Naive thymus-derived CD4-positive, alpha-beta T cell (primary cell): ENCODE measurements at regions of chr12 and their contacts with region 1.

Region 1: DNA sequence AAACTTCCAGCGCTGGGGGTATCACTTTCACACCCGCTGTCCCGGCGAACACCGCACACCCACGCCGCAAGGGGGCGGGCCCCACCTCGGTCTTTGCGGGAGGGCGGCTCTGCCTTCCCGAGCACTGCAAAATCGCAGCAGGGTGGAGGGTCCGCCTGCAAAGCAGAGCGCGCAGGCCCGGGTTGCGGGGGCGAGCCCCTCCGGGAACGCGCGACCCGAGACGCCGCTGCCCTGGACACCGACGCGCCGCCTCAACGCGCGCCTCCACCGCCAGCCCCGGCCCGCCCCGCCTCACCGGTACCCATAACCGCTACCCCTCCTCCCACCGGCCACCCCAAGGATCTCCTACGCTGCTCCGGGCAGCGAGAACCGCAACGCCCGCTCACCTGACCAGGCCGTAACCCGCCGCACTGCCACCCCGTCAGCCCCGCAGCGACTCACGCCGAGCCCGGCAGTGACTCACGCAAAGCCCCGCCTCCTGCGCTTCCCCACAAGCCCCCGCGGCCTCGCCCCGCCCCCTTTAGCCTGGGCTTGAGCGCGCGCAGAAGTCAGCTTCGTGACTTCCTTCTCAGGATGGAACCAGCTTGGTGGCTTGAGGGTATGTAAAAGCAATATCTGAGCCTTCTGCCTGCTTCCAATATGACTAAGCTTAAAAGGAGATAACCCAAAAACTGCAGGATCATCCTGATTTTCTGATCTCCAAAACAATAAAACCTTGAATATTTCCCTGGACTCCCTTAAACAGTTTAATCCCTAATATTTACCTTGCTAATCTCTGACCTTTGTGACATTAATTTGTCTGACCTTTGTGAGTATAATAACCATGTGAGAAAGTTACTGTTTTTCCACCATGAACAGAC is at the start of gene RPAP3:
- DNase-seq: peak; percentile 91 to 99 (median 95)
- ATAC-seq: peak; percentile 97
- H3K4me3 ChIP-seq: peak within 1 kb of the TSS; percentile 59
- H3K4me3 Mint-ChIP-seq: peak within 1 kb of the TSS; percentile 92 to 99 (median 98)
- H3K27ac ChIP-seq: peak within 1 kb of the TSS; percentile 85
- H3K27ac Mint-ChIP-seq: peak within 1 kb of the TSS; percentile 93 to 99 (median 97)
- H3K4me1 ChIP-seq: peaks cover 21 to 27% of the 10 kb centered on the region in 2 donors
- H3K4me1 Mint-ChIP-seq: peaks cover 48 to 73% (median 63%) of the 10 kb centered on the region in 7 donors
- H3K27me3 ChIP-seq: no peaks in the 10 kb centered on the region
- H3K27me3 Mint-ChIP-seq: no peaks in the 10 kb centered on the region
- total RNA-seq, gene RPAP3: 28.5 to 51.3 (median 43.9) TPM

Region 2: GRCh38 chr12:46382964-46383653 is 1322.7 kb before region 1 on chr12:
- CTCF ChIA-PET with region 1: no interaction called
- POLR2A ChIA-PET with region 1: no interaction called
- intact Hi-C with region 1: loop called in 1 of 2 experiments (anchors 1 kb)
- DNase-seq: peak; percentile 76 to 96 (median 90)
- ATAC-seq: peak; percentile 89
- H3K4me3 ChIP-seq: peak overlapping the region; percentile 61
- H3K4me3 Mint-ChIP-seq: peak overlapping the region; percentile 82 to 95 (median 91)
- H3K27ac ChIP-seq: peak overlapping the region; percentile 94
- H3K27ac Mint-ChIP-seq: peak overlapping the region; percentile 90 to 98 (median 97)
- H3K4me1 ChIP-seq: peaks cover 5 to 25% of the 10 kb centered on the region in 2 donors
- H3K4me1 Mint-ChIP-seq: peaks cover 24 to 53% (median 47%) of the 10 kb centered on the region in 7 donors
- H3K27me3 ChIP-seq: no peaks in the 10 kb centered on the region
- H3K27me3 Mint-ChIP-seq: no peaks in the 10 kb centered on the region

Region 3: DNA sequence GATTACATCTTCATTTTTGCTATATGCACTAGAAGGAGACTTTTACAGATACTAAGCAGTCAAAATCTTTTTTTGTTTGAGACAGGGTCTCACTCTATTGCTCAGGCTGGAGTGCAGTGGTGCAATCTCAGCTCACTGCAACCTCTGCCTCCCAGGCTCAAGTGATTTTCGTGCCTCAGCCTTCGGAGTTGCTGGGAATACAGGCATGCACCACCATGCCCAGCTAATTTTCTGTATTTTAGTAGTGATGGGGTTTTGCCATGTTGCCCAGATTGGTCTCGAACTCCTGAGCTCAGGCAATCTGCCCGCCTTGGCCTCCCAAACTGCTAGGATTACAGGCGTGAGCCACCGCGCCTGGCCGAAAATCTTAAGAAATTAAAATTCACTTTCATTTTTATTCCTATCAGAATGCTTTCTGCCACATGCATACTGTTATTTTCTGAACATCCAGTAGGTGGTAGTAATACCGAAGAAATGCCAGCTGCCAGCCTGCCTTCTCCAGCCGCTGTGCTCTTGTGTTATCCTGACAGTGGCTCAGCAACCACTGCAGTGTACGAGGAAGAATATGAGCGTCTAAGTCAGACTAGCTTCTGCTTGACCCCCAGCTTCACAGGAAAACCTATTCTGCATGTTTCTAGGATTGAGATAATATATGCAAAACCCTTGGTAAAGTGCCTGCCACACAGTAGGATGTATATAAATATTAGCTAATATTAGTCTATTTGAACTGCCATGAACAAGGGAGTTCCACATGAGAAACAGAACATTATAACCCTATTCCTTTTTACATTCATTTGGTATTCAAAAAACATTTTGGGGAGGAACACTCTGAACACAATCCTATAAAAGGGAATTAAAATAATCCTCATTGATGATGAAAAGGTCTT is 54.2 kb before region 1 on chr12:
- CTCF ChIA-PET with region 1: interaction called, 3 read pairs
- POLR2A ChIA-PET with region 1: no interaction called
- intact Hi-C with region 1: loop called in 1 of 2 experiments (anchors 5 kb)
- DNase-seq: peak in 8 of 9 donors; percentile 39 to 69 (median 56)
- ATAC-seq: peak; percentile 97
- H3K4me3 ChIP-seq: peak overlapping the region; percentile 38
- H3K4me3 Mint-ChIP-seq: peak overlapping the region; percentile 21 to 75 (median 44)
- H3K27ac ChIP-seq: peak overlapping the region; percentile 9
- H3K27ac Mint-ChIP-seq: peak overlapping the region in 8 of 9 donors; percentile 11 to 94 (median 64)
- H3K4me1 ChIP-seq: peaks cover 5 to 6% of the 10 kb centered on the region in 2 donors
- H3K4me1 Mint-ChIP-seq: peaks cover 8 to 21% (median 16%) of the 10 kb centered on the region in 7 donors
- H3K27me3 ChIP-seq: no peaks in the 10 kb centered on the region
- H3K27me3 Mint-ChIP-seq: no peaks in the 10 kb centered on the region

Region 4: DNA sequence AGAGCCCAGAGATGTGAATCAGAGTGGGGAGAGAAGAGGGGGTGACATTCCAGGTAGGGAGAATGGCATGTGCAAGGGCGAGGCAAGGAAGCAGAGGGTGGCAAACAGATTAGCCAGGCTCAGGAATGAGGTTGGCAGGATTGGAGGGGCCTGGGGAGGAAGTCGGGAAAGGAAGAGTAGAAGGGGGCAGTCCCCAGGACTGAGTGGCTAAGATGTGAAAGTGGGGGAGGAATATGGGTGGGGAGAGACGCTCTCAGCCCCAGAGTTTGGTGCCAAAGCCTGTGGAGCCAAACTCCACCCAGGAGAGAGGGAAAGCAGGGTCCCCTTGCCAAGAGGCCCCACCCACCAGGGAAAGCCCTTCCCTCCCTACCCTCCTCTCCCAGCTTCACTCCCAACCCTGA is 119.4 kb after region 1 on chr12:
- CTCF ChIA-PET with region 1: no interaction called
- POLR2A ChIA-PET with region 1: no interaction called
- intact Hi-C with region 1: no loop called
- DNase-seq: no peak
- ATAC-seq: no peak
- H3K4me3 ChIP-seq: no peak overlapping the region
- H3K4me3 Mint-ChIP-seq: peak overlapping the region; percentile 36 to 88 (median 78)
- H3K27ac ChIP-seq: peak overlapping the region; percentile 70
- H3K27ac Mint-ChIP-seq: peak overlapping the region; percentile 90 to 100 (median 97)
- H3K4me1 ChIP-seq: peaks cover 47 to 97% of the 10 kb centered on the region in 2 donors
- H3K4me1 Mint-ChIP-seq: peaks cover 76 to 98% (median 89%) of the 10 kb centered on the region in 7 donors
- H3K27me3 ChIP-seq: no peaks in the 10 kb centered on the region
- H3K27me3 Mint-ChIP-seq: no peaks in the 10 kb centered on the region

Region 5: GRCh38 chr12:47904713-47905310 is 199.0 kb after region 1 on chr12 and contains the start of gene VDR:
- CTCF ChIA-PET with region 1: no interaction called
- POLR2A ChIA-PET with region 1: no interaction called
- intact Hi-C with region 1: loop called (anchors 1 to 5 kb)
- DNase-seq: peak; percentile 42 to 76 (median 64)
- ATAC-seq: peak; percentile 86
- H3K4me3 ChIP-seq: peak within 1 kb of the TSS; percentile 73
- H3K4me3 Mint-ChIP-seq: peak within 1 kb of the TSS; percentile 86 to 98 (median 94)
- H3K27ac ChIP-seq: peak within 1 kb of the TSS; percentile 44
- H3K27ac Mint-ChIP-seq: peak within 1 kb of the TSS; percentile 51 to 88 (median 74)
- H3K4me1 ChIP-seq: peaks cover 25 to 41% of the 10 kb centered on the region in 2 donors
- H3K4me1 Mint-ChIP-seq: peaks cover 35 to 57% (median 47%) of the 10 kb centered on the region in 7 donors
- H3K27me3 ChIP-seq: no peaks in the 10 kb centered on the region
- H3K27me3 Mint-ChIP-seq: peaks cover 0 to 34% (median 0%) of the 10 kb centered on the region in 5 donors
- total RNA-seq, gene VDR: 1.6 to 82.6 (median 2.9) TPM

Region 6: DNA sequence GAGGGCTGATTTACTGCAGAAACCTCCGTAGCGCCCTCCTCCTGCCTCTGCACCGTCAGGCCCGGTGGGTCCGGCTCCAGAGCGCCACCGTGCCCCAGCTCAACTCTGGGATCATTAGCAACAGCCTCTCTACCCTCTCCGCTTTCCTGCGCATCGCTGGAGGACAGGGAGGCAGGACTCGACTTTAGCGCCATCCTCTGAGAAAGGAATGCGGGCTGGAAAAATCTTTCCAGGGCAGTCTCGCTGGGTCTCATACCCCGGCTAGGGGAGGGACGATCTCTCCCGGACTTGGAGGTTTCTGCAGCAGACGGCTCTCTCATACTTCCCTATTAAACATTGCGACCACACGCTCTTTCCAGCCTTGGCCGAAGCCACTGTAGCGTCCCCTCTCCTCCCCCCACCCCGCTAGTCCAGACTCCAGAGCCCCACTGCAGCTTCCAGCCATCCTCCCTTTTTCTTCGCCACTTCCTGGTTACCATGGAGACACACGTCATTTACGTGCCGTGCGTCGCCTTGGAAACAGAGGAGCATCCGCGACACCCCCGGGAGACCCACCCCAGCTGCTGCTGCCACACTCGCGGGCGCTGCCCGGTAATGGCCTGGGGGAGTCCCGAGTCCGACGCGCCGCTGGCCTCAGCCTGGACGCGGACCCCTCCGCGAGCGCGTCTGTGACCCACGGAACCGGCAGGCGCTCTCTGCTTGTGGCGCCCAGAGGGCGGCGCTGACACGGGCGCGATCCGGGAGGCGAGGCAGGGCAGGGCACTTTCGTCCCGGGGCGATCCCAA is 477.5 kb after region 1 on chr12 and contains the start of gene CCDC184:
- CTCF ChIA-PET with region 1: no interaction called
- POLR2A ChIA-PET with region 1: interaction called, 4 read pairs
- intact Hi-C with region 1: loop called in 1 of 2 experiments (anchors 5 kb)
- DNase-seq: peak; percentile 58 to 85 (median 83)
- ATAC-seq: peak; percentile 84
- H3K4me3 ChIP-seq: peak within 1 kb of the TSS; percentile 80
- H3K4me3 Mint-ChIP-seq: peak within 1 kb of the TSS; percentile 91 to 98 (median 96)
- H3K27ac ChIP-seq: peak within 1 kb of the TSS; percentile 59
- H3K27ac Mint-ChIP-seq: peak within 1 kb of the TSS; percentile 60 to 95 (median 86)
- H3K4me1 ChIP-seq: peaks cover 6 to 11% of the 10 kb centered on the region in 2 donors
- H3K4me1 Mint-ChIP-seq: peaks cover 5 to 28% (median 8%) of the 10 kb centered on the region in 7 donors
- H3K27me3 ChIP-seq: peaks cover 0 to 4% of the 10 kb centered on the region in 2 donors
- H3K27me3 Mint-ChIP-seq: peaks cover 21 to 81% (median 38%) of the 10 kb centered on the region in 5 donors
- total RNA-seq, gene CCDC184: 0.22 to 3.8 (median 1.8) TPM in 4 of 5 experiments, not detected in the other

Region 7: GRCh38 chr12:48716493-48717251 is 1010.9 kb after region 1 on chr12 and contains the start of gene CCNT1:
- CTCF ChIA-PET with region 1: no interaction called
- POLR2A ChIA-PET with region 1: no interaction called
- intact Hi-C with region 1: loop called in 1 of 2 experiments (anchors 2 kb)
- DNase-seq: peak; percentile 90 to 100 (median 99)
- ATAC-seq: peak; percentile 93
- H3K4me3 ChIP-seq: peak within 1 kb of the TSS; percentile 88
- H3K4me3 Mint-ChIP-seq: peak within 1 kb of the TSS; percentile 89 to 98 (median 94)
- H3K27ac ChIP-seq: peak within 1 kb of the TSS; percentile 95
- H3K27ac Mint-ChIP-seq: peak within 1 kb of the TSS; percentile 95 to 99 (median 98)
- H3K4me1 ChIP-seq: peaks cover 14 to 24% of the 10 kb centered on the region in 2 donors
- H3K4me1 Mint-ChIP-seq: peaks cover 21 to 50% (median 37%) of the 10 kb centered on the region in 7 donors
- H3K27me3 ChIP-seq: no peaks in the 10 kb centered on the region
- H3K27me3 Mint-ChIP-seq: peaks cover 0 to 4% (median 0%) of the 10 kb centered on the region in 5 donors
- total RNA-seq, gene CCNT1: 62.5 to 127 (median 76.6) TPM